ENCODE measurements at regions of chr4 and their contacts with region 1.

Region 1: GRCh38 chr4:107666134-107666533 is 53.9 kb downstream of the PAPSS1 start:
- DNase-seq: no peak
- ATAC-seq: peak in 1 of 8 donors; percentile 42
- H3K4me3 ChIP-seq: no peak overlapping the region
- H3K27ac ChIP-seq: no peak overlapping the region
- H3K4me1 ChIP-seq: peaks cover 0 to 13% (median 0%) of the 10 kb centered on the region in 9 donors
- H3K27me3 ChIP-seq: no peaks in the 10 kb centered on the region
- CTCF ChIP-seq: peak in 6 of 9 donors; percentile 24 to 58 (median 42)

Region 2: DNA sequence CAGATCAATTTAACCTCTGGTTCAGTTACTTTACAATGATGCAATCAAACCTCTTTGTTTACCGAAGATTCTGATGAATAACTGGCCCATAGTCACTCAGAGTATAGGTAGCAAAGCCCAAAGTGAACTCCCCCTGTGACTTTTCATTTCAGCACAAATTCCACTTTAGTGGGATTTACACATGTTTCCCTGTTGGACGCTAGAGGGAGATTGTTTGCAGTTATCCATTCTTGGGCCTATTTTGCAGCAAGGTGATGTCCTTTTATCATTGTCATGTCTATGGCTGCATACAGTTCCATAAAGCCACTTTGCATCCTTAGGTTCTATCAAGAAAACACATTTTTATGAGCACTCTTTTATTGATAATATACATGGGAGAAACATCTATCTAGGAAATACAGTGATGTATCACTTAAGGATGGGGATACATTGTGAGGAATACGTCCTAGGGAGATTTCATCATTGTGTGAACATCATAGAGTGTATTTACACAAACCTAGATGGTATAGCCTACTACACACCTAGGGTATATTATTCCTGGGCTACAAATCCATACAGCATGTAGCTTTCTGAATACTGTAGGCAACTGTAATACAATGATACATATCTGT is 615.5 kb before region 1 on chr4:
- intact Hi-C with region 1: loop called in 1 of 10 experiments (anchors 10 kb)
- DNase-seq: no peak
- ATAC-seq: no peak
- H3K4me3 ChIP-seq: no peak overlapping the region
- H3K27ac ChIP-seq: no peak overlapping the region
- H3K4me1 ChIP-seq: no peaks in the 10 kb centered on the region
- H3K27me3 ChIP-seq: no peaks in the 10 kb centered on the region
- CTCF ChIP-seq: peak in 7 of 9 donors; percentile 32 to 59 (median 42)

Region 3: DNA sequence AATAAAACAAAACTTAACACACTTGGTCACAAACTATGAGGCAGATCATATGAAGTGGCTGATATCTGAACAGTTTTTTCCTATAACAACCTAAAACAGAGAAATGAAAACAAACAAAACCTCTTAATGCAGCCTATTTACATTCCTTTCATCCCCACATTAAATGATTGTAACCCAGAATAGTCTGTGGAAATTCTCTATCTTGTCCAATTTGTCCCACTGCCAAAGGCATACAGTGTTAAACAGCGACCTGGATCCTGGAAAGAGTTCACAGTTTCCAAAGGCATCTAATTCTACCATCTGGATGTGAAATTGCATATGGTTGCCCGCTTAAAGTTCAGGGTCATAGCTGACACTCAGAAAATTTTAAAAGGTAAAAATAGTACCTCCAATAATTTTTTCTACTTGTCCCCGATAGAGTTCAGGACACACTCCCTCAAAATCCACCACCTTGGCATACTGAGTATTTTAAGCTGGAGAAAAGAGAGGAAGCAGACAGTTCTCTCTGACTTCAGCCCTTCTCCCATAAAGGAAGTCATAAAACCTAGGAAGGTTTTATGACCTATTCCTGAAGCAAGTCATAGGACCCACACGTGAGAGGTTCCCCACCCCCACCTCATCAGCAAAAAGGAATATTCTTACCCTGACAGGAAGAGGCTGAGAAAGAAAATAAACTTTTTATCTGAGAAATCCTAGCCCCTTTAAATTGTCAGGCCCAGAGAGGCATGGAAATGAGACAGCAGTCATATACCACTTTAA is 216.3 kb before region 1 on chr4:
- intact Hi-C with region 1: loop called in 1 of 10 experiments (anchors 10 kb)
- DNase-seq: no peak
- ATAC-seq: no peak
- H3K4me3 ChIP-seq: no peak overlapping the region
- H3K27ac ChIP-seq: no peak overlapping the region
- H3K4me1 ChIP-seq: peaks cover 0 to 4% (median 0%) of the 10 kb centered on the region in 9 donors
- H3K27me3 ChIP-seq: no peaks in the 10 kb centered on the region
- CTCF ChIP-seq: no peak

Region 4: DNA sequence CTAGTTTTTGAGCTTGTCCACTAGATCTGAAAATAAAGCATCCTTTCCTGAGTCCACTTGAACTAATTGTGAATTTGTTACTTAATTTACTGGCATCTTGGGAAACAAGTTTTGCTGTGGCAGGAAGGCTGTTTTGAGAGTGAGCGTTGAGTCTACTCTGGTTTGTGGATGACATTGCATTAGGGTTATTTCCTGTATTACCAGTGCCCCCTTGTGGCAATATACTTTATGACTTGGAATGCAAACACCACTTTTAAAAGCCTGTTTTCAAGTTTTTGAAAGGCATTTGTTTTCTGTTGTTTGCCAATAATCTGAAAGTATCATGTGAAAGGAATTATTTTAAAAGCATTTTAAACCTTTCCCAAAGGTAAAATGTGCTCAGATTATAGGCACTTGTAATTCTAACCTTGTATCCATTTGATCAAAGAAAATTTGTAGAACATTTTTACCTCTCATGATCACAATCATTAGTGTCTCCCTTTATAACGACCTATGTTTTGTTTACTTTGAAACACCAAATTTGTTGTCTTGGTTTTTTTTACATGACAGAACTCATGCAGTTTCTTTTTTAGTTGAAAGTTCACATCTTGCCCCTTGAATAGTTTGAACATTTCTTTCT is 247.3 kb after region 1 on chr4:
- intact Hi-C with region 1: no loop called
- DNase-seq: peak in 1 of 2 donors; percentile 67
- ATAC-seq: peak in 7 of 8 donors; percentile 55 to 83 (median 76)
- H3K4me3 ChIP-seq: no peak overlapping the region
- H3K27ac ChIP-seq: no peak overlapping the region
- H3K4me1 ChIP-seq: peaks cover 0 to 4% (median 0%) of the 10 kb centered on the region in 9 donors
- H3K27me3 ChIP-seq: no peaks in the 10 kb centered on the region
- CTCF ChIP-seq: peak; percentile 58 to 92 (median 79)